Activated naive CD4-positive, alpha-beta T cell treated with anti-CD3 and anti-CD28 coated beads, Interleukin-2, amount 10 ng/mL, durations not matched to agents 7 days and 5 days (primary cell): ENCODE measurements at regions of chr4 and their contacts with region 1.

Region 1: GRCh38 chr4:48033825-48034413 is 17.3 kb downstream of the NIPAL1 start:
- DNase-seq: peak; percentile 75
- H3K4me3 Mint-ChIP-seq: no peak overlapping the region
- H3K27ac Mint-ChIP-seq: no peak overlapping the region
- H3K4me1 Mint-ChIP-seq: peaks cover 13% of the 10 kb centered on the region
- H3K27me3 Mint-ChIP-seq: no peaks in the 10 kb centered on the region

Region 2: GRCh38 chr4:48047421-48047844 is 13.5 kb after region 1 on chr4:
- CTCF ChIA-PET with region 1: interaction called, 54 read pairs
- DNase-seq: peak; percentile 80
- H3K4me3 Mint-ChIP-seq: peak overlapping the region; percentile 19
- H3K27ac Mint-ChIP-seq: no peak overlapping the region
- H3K4me1 Mint-ChIP-seq: peaks cover 40% of the 10 kb centered on the region
- H3K27me3 Mint-ChIP-seq: peaks cover 67% of the 10 kb centered on the region

Region 3: GRCh38 chr4:48085821-48086607 is 52.1 kb after region 1 on chr4:
- CTCF ChIA-PET with region 1: interaction called, 32 read pairs
- DNase-seq: no peak
- H3K4me3 Mint-ChIP-seq: no peak overlapping the region
- H3K27ac Mint-ChIP-seq: no peak overlapping the region
- H3K4me1 Mint-ChIP-seq: no peaks in the 10 kb centered on the region
- H3K27me3 Mint-ChIP-seq: no peaks in the 10 kb centered on the region